ENCODE measurements at regions of chr19 and their contacts with region 1.

Region 1: DNA sequence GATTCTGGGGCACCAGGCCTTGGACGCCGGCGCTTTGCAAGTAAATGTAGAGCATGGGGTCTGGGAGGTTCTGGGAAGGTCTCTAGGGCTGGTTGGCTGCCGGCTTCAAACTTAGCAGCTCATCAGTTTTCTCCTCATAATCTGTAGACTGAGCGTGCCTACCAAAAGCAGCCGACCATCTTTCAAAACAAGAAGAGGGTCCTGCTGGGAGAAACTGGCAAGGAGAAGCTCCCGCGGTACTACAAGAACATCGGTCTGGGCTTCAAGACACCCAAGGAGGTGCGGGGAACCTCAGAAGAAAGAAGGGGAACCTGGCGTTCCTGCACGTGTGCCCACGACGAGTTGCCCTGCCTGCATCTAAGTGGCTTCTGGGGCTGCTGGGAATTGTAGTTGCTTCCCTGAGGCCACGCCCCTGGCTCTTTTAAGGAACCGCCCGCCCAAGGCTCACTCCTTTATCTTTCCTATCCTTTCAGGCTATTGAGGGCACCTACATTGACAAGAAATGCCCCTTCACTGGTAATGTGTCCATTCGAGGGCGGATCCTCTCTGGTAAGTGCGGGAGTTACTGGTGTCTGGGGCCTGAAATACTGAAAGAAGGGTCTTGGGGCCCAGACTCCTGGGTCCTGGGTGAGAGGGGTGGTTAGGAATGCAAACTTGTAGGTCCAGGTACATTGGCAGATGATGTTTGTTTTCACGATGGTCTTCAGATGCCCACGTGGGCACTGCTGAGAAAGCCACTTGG is 984 bp downstream of the RPS11 start:
- DNase-seq: no peak
- H3K4me3 ChIP-seq: peak overlapping the region; percentile 94
- CTCF ChIP-seq: no peak

Region 2: DNA sequence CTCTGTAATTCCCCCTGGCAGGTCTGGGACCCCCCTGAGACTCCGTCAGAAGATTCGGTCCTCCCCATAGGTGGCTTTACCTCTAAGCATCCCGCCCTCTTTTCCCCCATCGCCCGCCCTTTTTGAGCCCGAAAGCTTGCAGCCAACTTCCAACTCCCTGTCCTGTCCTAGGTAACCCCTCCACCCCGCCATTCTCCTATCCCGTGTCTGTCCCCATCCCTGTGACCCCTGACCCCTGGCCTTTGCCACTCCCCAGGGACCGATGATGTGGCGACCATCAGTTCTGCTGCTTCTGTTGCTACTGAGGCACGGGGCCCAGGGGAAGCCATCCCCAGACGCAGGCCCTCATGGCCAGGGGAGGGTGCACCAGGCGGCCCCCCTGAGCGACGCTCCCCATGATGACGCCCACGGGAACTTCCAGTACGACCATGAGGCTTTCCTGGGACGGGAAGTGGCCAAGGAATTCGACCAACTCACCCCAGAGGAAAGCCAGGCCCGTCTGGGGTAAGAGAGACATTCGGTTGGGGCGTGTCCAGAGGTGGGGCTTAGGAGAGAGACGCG is 31.1 kb after region 1 on chr19:
- CTCF ChIA-PET with region 1: interaction called, 23 read pairs
- POLR2A ChIA-PET with region 1: interaction called, 17 read pairs
- DNase-seq: no peak
- H3K4me3 ChIP-seq: peak overlapping the region; percentile 91
- CTCF ChIP-seq: no peak